PC-3 (cell line): ENCODE measurements at regions of chr3 and their contacts with region 1.

Region 1: GRCh38 chr3:31981206-31982181 is at the starts of genes OSBPL10 and ZNF860:
- DNase-seq: peak; percentile 96
- ATAC-seq: peak; percentile 66
- H3K4me3 ChIP-seq: peak within 1 kb of the TSS; percentile 89
- H3K27ac ChIP-seq: peak within 1 kb of the TSS; percentile 87
- H3K4me1 ChIP-seq: peaks cover 56% of the 10 kb centered on the region
- H3K27me3 ChIP-seq: no peaks in the 10 kb centered on the region
- CTCF ChIP-seq: no peak
- total RNA-seq, gene OSBPL10: 34.6 and 48.0 TPM in 2 replicates
- total RNA-seq, gene ZNF860: 7.9 and 10.5 TPM in 2 replicates

Region 2: GRCh38 chr3:31876331-31876730 is 105.2 kb before region 1 on chr3:
- CTCF ChIA-PET with region 1: no interaction called
- POLR2A ChIA-PET with region 1: no interaction called
- intact Hi-C with region 1: loop called (anchors 2 kb)
- DNase-seq: peak; percentile 81
- ATAC-seq: peak; percentile 88
- H3K4me3 ChIP-seq: peak overlapping the region; percentile 26; the same call in 1 of the 2 replicates
- H3K27ac ChIP-seq: peak overlapping the region; percentile 63
- H3K4me1 ChIP-seq: peaks cover 17% of the 10 kb centered on the region
- H3K27me3 ChIP-seq: no peaks in the 10 kb centered on the region
- CTCF ChIP-seq: no peak

Region 3: GRCh38 chr3:31917303-31918005 is 64.0 kb before region 1 on chr3:
- CTCF ChIA-PET with region 1: no interaction called
- POLR2A ChIA-PET with region 1: no interaction called
- intact Hi-C with region 1: loop called (anchors 2 kb)
- DNase-seq: no peak
- ATAC-seq: no peak
- H3K4me3 ChIP-seq: no peak overlapping the region
- H3K27ac ChIP-seq: no peak overlapping the region
- H3K4me1 ChIP-seq: peaks cover 28% of the 10 kb centered on the region
- H3K27me3 ChIP-seq: no peaks in the 10 kb centered on the region
- CTCF ChIP-seq: no peak

Region 4: DNA sequence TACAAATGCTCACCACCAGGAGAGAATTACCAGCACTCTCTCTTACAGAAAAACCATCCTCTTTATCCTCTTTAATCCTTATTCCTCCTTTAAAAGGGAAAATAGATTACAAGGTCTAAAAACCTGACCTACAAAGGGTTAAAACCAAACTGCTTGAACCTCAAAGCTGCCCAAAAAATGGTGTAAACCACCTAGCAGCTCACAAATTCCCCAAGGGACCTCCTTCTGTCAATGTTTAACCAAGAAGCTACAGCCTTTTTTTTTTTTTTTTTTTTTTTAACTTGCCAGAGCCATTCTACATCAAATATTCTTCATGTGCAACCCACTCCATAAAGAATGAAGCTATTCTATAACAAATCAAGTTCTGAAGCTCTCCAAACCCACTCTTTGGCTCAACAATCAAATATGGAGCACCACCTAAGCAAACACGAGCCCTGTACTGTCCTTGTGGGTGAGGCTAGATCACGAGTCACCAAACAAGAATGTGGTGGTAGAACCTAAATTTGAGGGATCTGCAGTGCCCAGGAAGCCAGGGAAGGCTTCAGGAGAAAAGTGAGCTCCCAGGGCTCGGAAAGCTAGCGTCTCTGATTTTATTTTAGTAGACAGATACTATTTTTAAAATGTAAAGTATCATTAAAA is 20.6 kb before region 1 on chr3:
- CTCF ChIA-PET with region 1: interaction called, 4 read pairs
- POLR2A ChIA-PET with region 1: interaction called, 3 read pairs
- intact Hi-C with region 1: loop called (anchors 2 kb)
- DNase-seq: peak; percentile 84
- ATAC-seq: peak; percentile 64
- H3K4me3 ChIP-seq: no peak overlapping the region
- H3K27ac ChIP-seq: peak overlapping the region; percentile 9
- H3K4me1 ChIP-seq: peaks cover 47% of the 10 kb centered on the region
- H3K27me3 ChIP-seq: no peaks in the 10 kb centered on the region
- CTCF ChIP-seq: no peak

Region 5: DNA sequence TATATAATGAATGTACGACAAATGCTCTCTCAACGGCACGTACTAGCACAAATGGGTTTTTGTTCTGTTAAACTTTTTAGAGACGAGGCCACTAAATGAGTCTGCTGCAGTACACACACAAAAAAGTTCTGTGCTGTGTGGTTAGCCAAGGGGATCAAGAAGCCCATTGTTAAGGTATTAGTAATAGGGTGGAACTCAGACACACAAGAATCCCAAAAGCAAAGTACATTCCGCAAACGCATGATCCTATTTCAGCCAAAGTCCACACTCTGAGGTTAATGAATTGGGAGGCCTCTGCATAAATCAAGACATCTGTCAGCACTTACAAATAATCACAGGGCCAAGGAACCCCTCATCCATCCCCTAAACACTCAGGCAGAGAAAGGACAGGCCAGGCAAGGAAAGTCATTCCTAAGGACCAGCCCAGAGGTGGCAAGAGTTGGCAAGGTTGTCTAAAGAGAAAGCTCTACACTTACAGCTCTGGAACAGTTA is 12.5 kb before region 1 on chr3:
- CTCF ChIA-PET with region 1: interaction called, 4 read pairs
- POLR2A ChIA-PET with region 1: interaction called, 5 read pairs
- intact Hi-C with region 1: loop called (anchors 1 kb)
- DNase-seq: peak; percentile 97
- ATAC-seq: peak; percentile 90
- H3K4me3 ChIP-seq: peak overlapping the region; percentile 52
- H3K27ac ChIP-seq: peak overlapping the region; percentile 92
- H3K4me1 ChIP-seq: peaks cover 45% of the 10 kb centered on the region
- H3K27me3 ChIP-seq: no peaks in the 10 kb centered on the region
- CTCF ChIP-seq: no peak

Region 6: DNA sequence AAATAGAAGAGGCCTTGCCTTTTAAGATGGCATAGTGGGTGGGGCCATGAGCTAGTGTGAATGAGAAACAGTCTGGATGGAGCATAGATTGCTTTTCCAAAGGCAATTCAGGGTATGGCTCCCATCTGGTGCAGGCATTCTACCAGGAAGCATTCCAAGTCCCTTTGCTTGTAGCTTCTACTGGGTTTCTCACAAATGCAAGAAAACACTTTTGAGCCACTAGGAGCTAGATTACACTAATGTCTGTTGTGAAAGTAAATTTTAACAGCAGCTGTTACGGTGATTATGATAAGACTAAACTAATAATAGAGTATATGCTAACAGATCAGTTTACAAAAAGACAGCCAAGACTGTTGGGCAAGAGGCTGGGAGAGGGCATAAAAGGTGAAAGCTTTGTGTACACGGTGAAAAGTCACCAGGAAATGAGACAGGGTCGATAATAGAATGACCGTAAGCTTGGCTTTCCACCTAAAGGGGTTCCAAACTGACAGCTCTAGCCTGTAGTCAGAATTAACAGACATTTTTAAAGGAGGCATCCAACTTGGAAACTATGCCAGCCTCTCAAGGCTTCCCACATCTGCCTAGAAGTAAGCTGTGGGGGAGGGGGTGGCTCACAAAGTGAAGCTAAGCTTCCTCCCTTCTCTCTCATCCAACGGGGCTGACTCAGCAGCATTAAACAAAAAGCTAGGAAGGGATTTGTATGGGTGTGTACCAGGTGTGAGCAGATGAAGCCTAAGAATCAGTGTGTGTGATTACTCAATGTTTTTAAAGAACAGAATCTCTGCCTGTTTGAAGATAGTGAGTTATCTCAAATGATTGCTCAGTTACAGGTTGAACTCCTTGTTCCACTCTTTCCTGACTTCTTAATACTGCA is 63.8 kb after region 1 on chr3:
- CTCF ChIA-PET with region 1: no interaction called
- POLR2A ChIA-PET with region 1: no interaction called
- intact Hi-C with region 1: loop called (anchors 2 kb)
- DNase-seq: peak; percentile 92
- ATAC-seq: peak; percentile 87
- H3K4me3 ChIP-seq: peak overlapping the region; percentile 31
- H3K27ac ChIP-seq: peak overlapping the region; percentile 91
- H3K4me1 ChIP-seq: peaks cover 27% of the 10 kb centered on the region
- H3K27me3 ChIP-seq: no peaks in the 10 kb centered on the region
- CTCF ChIP-seq: no peak

Region 7: GRCh38 chr3:32106280-32106928 is 124.9 kb after region 1 on chr3 and contains the start of gene GPD1L:
- CTCF ChIA-PET with region 1: no interaction called
- POLR2A ChIA-PET with region 1: no interaction called
- intact Hi-C with region 1: loop called (anchors 1 kb)
- DNase-seq: peak; percentile 98
- ATAC-seq: peak; percentile 90
- H3K4me3 ChIP-seq: peak within 1 kb of the TSS; percentile 93
- H3K27ac ChIP-seq: peak within 1 kb of the TSS; percentile 86
- H3K4me1 ChIP-seq: peaks cover 51% of the 10 kb centered on the region
- H3K27me3 ChIP-seq: no peaks in the 10 kb centered on the region
- CTCF ChIP-seq: no peak
- total RNA-seq, gene GPD1L: 33.7 and 42.8 TPM in 2 replicates